ENCODE measurements at regions of chr6 and their contacts with region 1.

Region 1: DNA sequence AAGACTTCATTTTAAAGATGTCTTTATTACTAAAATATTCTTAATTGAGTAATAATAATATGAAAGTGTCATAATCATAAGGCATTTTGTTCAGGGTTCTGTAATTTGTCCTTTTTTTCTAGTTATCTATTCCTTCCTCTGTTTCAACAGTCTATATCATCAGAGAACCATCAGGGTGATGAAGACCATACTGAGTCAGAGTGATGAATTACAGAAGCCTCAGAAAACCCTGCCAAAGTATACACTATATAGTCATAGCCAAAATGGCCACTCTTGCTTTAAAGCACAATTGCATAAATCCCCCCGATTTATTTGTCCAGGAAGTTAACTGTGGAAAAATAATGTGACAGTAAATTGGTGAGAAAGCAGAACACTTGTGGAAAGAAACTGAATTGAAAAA is 735.0 kb downstream of the EPHA7 start:
- DNase-seq: peak; percentile 66
- ATAC-seq: peak; percentile 67
- H3K4me3 ChIP-seq: no peak overlapping the region
- H3K27ac ChIP-seq: peak overlapping the region; percentile 31; the same call in 1 of the 2 replicates
- H3K4me1 ChIP-seq: peaks cover 26% of the 10 kb centered on the region
- H3K27me3 ChIP-seq: no peaks in the 10 kb centered on the region
- CTCF ChIP-seq: no peak

Region 2: DNA sequence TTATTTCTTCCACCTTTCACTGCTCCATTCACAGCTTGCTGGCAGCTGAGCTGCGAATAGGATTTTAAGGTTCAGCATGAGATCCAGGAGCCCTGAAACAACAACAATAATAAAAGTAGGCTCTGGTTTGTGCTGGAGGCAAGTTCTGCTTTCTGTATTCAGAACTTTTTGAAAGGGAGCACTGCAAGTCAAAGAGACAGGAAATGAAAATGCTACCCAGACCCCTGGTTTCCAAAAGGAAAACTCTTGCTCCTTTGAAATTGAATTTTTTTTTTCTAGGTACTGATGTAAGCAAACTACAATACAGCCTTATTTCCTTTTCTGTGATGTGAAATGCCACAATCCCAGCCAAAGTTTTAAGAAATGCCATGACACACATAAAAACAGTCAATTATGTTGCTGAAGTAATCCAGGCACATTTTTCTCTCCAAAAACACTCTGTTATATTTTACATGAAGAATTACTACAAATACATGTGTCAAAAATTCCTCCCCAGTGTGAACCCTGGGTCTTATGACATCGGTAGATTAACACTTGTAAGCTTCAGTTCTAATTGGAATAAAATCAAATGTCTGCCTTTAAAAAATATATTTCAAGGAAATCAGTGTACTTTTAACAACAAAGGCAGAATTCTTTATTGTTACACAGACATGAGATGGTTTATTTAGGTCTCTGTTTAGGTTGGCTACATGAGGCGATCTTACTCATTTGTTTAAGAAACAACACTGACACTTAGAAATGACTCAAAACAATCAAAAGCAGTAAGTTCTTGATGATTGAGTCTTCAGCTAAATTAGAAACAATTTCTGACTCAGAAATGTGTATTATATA is 78.3 kb after region 1 on chr6:
- CTCF ChIA-PET with region 1: no interaction called
- POLR2A ChIA-PET with region 1: no interaction called
- intact Hi-C with region 1: loop called (anchors 1 kb)
- DNase-seq: peak; percentile 57
- ATAC-seq: peak; percentile 77
- H3K4me3 ChIP-seq: no peak overlapping the region
- H3K27ac ChIP-seq: peak overlapping the region; percentile 14; the same call in 1 of the 2 replicates
- H3K4me1 ChIP-seq: peaks cover 20% of the 10 kb centered on the region
- H3K27me3 ChIP-seq: no peaks in the 10 kb centered on the region
- CTCF ChIP-seq: no peak